ENCODE measurements at regions of chr9 and their contacts with region 1.

Region 1: DNA sequence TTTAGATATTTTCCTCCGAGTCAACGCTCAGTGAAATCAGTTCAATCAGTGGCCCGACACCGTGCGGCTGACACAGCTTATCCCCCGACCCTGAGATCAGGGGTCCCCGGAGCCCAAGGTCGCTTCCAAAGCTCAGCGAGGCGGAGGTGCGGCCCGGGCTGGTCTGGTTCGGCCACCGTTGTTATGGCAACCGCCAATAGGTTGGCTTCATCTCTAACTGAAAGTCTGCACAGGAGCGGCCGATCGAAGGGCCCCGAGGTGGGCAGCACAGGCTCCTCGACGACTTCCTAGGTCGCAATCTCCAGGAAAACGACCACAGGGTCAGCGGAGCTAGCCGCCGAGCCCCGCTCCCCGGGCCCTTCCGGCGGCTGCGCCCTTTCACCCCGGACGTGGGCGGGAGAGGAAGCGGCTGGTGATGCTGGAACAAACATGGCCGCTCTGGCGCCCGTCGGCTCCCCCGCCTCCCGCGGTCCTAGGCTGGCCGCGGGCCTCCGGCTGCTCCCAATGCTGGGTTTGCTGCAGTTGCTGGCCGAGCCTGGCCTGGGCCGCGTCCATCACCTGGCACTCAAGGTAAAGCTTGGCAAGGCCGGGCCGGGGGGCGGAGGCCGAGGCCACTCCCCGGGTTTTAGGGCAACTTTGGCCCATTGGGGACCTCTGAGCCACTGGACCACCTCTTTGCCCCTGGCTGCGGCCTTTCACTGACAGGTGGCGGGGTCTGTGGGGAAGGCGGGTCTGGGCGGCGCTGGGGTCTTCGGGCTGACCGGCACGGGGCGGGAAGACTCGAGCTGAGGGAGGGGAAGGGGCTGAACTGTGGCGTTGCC is at the start of gene GPR107:
- DNase-seq: peak; percentile 77
- H3K4me3 Mint-ChIP-seq: peak within 1 kb of the TSS; percentile 96
- H3K27ac Mint-ChIP-seq: peak within 1 kb of the TSS; percentile 92
- H3K4me1 Mint-ChIP-seq: peaks cover 34% of the 10 kb centered on the region
- H3K27me3 Mint-ChIP-seq: no peaks in the 10 kb centered on the region
- total RNA-seq, gene GPR107: 23.1 and 24.9 TPM in 2 replicates

Region 2: GRCh38 chr9:128829477-128830251 is 1224.0 kb before region 1 on chr9 and contains the start of gene SPOUT1:
- intact Hi-C with region 1: no loop called
- DNase-seq: peak; percentile 95
- H3K4me3 Mint-ChIP-seq: peak within 1 kb of the TSS; percentile 97
- H3K27ac Mint-ChIP-seq: peak within 1 kb of the TSS; percentile 88
- H3K4me1 Mint-ChIP-seq: peaks cover 23% of the 10 kb centered on the region
- H3K27me3 Mint-ChIP-seq: no peaks in the 10 kb centered on the region
- total RNA-seq, gene SPOUT1: 151 and 158 TPM in 2 replicates

Region 3: DNA sequence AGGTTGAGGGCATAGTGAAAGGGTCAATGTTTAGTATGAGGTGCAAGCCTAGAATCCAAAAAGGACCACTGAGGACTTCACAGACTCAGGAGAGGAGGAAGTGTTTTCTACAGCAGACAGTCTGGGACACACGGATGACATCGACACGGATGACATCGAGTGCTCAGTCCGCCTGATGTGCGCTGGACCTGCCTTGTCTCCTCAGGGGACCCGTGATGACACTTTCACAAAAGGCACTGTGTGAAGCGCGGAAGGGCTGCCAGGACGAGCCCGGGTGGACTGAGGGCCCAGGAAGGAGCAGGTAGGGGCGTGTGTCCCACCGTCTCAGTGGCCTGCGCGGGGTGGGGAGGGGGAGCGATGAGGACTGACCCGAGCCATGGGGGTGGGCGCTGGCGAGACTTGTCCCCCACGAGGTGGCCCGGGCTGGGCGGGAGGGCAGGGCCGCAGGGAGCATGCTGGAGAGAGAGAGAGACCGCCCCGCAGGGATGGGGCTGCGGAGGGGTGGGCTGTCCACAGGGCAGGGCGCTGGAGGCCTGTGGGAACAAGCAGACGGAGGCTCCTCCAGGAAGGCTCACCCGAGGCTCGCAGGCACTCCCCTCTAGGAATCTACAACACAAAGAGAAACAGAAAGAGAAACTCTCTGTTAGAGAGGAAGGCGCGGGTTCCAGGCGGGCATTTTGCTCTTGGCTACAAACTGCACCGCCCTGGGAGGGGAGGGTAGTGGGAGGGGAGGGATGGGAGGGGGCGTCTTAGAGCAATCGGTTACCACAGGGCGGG is 163.6 kb before region 1 on chr9:
- intact Hi-C with region 1: loop called (anchors 1 kb)
- DNase-seq: peak; percentile 77
- H3K4me3 Mint-ChIP-seq: peak overlapping the region; percentile 71
- H3K27ac Mint-ChIP-seq: peak overlapping the region; percentile 100
- H3K4me1 Mint-ChIP-seq: peaks cover 95% of the 10 kb centered on the region
- H3K27me3 Mint-ChIP-seq: peaks cover 2% of the 10 kb centered on the region

Region 4: GRCh38 chr9:130042833-130043653 is 10.7 kb before region 1 on chr9 and contains the start of gene FNBP1:
- intact Hi-C with region 1: loop called (anchors 1 kb)
- DNase-seq: peak; percentile 78
- H3K4me3 Mint-ChIP-seq: peak within 1 kb of the TSS; percentile 97
- H3K27ac Mint-ChIP-seq: peak within 1 kb of the TSS; percentile 99
- H3K4me1 Mint-ChIP-seq: peaks cover 55% of the 10 kb centered on the region
- H3K27me3 Mint-ChIP-seq: no peaks in the 10 kb centered on the region
- total RNA-seq, gene FNBP1: 195 and 202 TPM in 2 replicates

Measured in activated T-helper 1 cell treated with anti-CD3 and anti-CD28 coated beads, Interleukin-12 subunit alpha, Interleukin-12 subunit beta, Interleukin-2, Interleukin-4 antibody, amounts not matched to agents 30 ng/mL and 10 ng/mL and 1 ng/mL, durations not matched to agents 14 hours and 24 hours and 36 hours (primary cell).